WTC11 (cell line): ENCODE measurements at regions of chr22 and their contacts with region 1.

Region 1: GRCh38 chr22:37126882-37127281 is 17.4 kb upstream of the TMPRSS6 start:
- DNase-seq: peak; percentile 47
- ATAC-seq: peak; percentile 47
- H3K4me3 Mint-ChIP-seq: no peak overlapping the region
- H3K27ac Mint-ChIP-seq: no peak overlapping the region
- H3K4me1 Mint-ChIP-seq: peaks cover 29% of the 10 kb centered on the region
- H3K27me3 Mint-ChIP-seq: no peaks in the 10 kb centered on the region; the same call in 1 of the 2 replicates
- CTCF ChIP-seq: peak; percentile 59; the same call in 1 of the 2 replicates

Region 2: GRCh38 chr22:37098976-37099591 is 27.8 kb before region 1 on chr22:
- CTCF ChIA-PET with region 1: interaction called, 14 read pairs
- POLR2A ChIA-PET with region 1: no interaction called
- DNase-seq: peak; percentile 59
- ATAC-seq: peak; percentile 80
- H3K4me3 Mint-ChIP-seq: no peak overlapping the region
- H3K27ac Mint-ChIP-seq: no peak overlapping the region
- H3K4me1 Mint-ChIP-seq: peaks cover 5% of the 10 kb centered on the region; the same call in 1 of the 2 replicates
- H3K27me3 Mint-ChIP-seq: peaks cover 32% of the 10 kb centered on the region
- CTCF ChIP-seq: no peak

Region 3: GRCh38 chr22:37139762-37140161 is 12.9 kb after region 1 on chr22:
- CTCF ChIA-PET with region 1: interaction called, 14 read pairs
- POLR2A ChIA-PET with region 1: no interaction called
- DNase-seq: no peak
- ATAC-seq: peak; percentile 46
- H3K4me3 Mint-ChIP-seq: no peak overlapping the region
- H3K27ac Mint-ChIP-seq: no peak overlapping the region
- H3K4me1 Mint-ChIP-seq: no peaks in the 10 kb centered on the region
- H3K27me3 Mint-ChIP-seq: no peaks in the 10 kb centered on the region; the same call in 1 of the 2 replicates
- CTCF ChIP-seq: no peak

Region 4: DNA sequence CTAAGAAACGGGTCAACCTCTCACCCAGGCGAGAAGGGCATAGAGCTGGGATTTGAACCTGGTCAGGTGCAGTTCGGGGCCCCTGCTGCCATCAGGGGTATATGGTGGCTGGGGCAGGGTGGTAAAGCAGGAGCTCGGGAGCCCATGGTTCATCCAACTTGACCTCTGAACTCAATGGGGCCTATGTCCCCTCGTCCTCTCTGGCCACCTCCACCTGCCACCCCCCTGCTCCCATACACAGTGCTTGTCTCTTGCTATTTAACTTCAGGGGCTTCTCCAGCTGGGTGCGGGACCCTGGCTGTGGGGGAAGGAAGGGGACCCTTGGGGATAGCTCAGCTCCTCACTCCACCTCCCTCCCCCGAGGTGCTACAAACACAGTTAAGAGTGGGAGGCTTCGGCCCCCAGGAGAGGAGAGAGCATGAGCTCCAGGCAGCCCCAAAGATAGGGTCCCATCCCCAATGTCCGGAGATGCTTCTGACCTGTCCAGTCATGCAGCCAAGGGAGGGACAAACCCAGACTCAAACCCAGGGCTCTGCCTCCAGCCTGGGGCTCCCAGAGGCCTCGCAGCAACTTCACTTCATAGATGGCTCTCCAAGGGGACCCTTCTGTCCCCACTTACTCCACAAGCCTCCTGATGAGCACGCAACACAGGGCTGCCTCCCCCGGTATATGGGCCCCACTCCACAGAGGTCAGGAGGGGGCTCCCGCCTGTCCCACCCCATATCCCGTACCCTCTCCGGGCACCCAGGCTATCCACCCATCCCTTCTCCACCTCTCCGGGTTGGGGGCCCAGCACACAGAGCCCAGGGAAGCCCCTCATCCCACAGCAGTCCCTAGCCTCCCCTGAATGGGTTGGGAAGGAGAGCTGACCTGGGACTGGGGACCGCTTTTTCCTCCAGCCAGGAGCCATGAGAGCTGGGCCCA is 22.1 kb after region 1 on chr22:
- CTCF ChIA-PET with region 1: interaction called, 13 read pairs
- POLR2A ChIA-PET with region 1: no interaction called
- DNase-seq: no peak
- ATAC-seq: no peak
- H3K4me3 Mint-ChIP-seq: no peak overlapping the region
- H3K27ac Mint-ChIP-seq: no peak overlapping the region
- H3K4me1 Mint-ChIP-seq: peaks cover 15% of the 10 kb centered on the region
- H3K27me3 Mint-ChIP-seq: peaks cover 5% of the 10 kb centered on the region
- CTCF ChIP-seq: no peak

Region 5: GRCh38 chr22:37157516-37158289 is 30.8 kb after region 1 on chr22:
- CTCF ChIA-PET with region 1: interaction called, 27 read pairs
- POLR2A ChIA-PET with region 1: no interaction called
- DNase-seq: no peak
- ATAC-seq: no peak
- H3K4me3 Mint-ChIP-seq: no peak overlapping the region
- H3K27ac Mint-ChIP-seq: no peak overlapping the region
- H3K4me1 Mint-ChIP-seq: 0 out of 2 replicates have a peak, but pooled peaks cover 2% of the 10 kb centered on the region
- H3K27me3 Mint-ChIP-seq: peaks cover 5% of the 10 kb centered on the region; the same call in 1 of the 2 replicates
- CTCF ChIP-seq: no peak

Region 6: DNA sequence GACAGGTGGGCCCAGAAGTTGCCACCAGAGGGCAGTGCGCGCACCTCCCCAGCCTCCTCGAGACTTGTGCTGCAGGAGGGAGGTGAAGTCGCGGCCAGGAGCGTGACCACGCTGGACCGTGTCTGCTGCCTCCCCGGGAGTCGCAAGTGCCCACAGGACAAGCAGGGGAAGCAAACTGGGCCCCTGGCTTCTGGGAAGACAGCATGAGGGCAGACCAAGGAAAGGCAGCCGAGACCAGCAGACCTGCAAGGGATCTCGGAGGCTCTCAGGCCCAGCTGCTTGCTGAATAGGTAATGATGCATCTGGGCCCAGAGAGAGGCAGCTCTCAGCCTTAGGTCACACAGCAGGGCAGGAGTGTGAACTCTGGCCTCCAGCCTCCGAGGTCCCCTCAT is 39.8 kb after region 1 on chr22:
- CTCF ChIA-PET with region 1: interaction called, 27 read pairs
- POLR2A ChIA-PET with region 1: no interaction called
- DNase-seq: peak; percentile 84
- ATAC-seq: peak; percentile 88
- H3K4me3 Mint-ChIP-seq: no peak overlapping the region; the same call in 1 of the 2 replicates
- H3K27ac Mint-ChIP-seq: no peak overlapping the region
- H3K4me1 Mint-ChIP-seq: peaks cover 16% of the 10 kb centered on the region
- H3K27me3 Mint-ChIP-seq: peaks cover 7% of the 10 kb centered on the region
- CTCF ChIP-seq: no peak; the same call in 1 of the 2 replicates

Region 7: DNA sequence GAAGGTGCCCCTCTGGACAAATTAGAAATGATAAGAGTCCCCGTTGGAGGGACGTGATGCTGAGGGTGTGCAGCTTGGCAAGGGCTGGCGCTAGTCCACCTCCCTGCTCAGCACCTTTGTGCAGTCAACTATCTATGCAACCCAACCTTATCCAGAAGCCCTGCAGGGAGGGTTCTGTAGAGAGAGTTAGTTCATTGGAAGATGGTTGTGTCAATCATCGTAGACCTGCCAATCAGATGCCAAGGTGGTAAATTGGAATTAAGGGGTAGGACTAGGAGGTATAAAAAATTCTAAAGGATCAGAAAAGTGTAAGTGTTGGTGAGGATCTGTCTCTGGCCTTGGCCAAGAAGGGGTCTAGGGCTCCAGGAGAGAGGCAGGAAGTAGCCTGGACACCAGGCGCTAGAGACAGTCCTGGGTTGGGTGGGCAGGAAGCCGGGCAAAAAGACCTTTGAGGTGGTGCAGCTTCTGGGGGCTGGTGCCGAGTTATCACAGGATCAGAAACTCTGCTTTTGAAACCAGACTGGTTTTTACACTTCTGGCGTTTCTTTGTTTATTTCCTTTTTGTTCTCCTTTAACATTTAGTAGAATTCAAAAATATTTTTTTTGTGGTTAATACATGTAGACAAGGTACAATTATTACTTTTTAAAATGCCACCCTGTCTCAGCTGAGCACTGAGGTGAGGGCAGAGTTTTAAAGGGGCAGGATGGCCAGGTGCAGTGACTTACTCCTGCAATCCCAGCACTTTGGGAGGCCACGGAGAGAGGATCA is 59.5 kb after region 1 on chr22:
- CTCF ChIA-PET with region 1: no interaction called
- POLR2A ChIA-PET with region 1: no interaction called
- DNase-seq: no peak
- ATAC-seq: peak; percentile 60
- H3K4me3 Mint-ChIP-seq: peak overlapping the region; percentile 56
- H3K27ac Mint-ChIP-seq: peak overlapping the region; percentile 82; the same call in 1 of the 2 replicates
- H3K4me1 Mint-ChIP-seq: peaks cover 49% of the 10 kb centered on the region
- H3K27me3 Mint-ChIP-seq: no peaks in the 10 kb centered on the region
- CTCF ChIP-seq: no peak